ENCODE measurements at regions of chr12 and their contacts with region 1.

Region 1: GRCh38 chr12:17763366-17763765 is 326.6 kb downstream of the RERGL start:
- DNase-seq: no peak
- ATAC-seq: no peak
- H3K4me3 ChIP-seq: no peak overlapping the region
- H3K4me1 ChIP-seq: no peaks in the 10 kb centered on the region
- CTCF ChIP-seq: no peak

Region 2: GRCh38 chr12:17841496-17841895 is 78.1 kb after region 1 on chr12:
- intact Hi-C with region 1: loop called in 1 of 2 experiments (anchors 5 kb)
- DNase-seq: no peak
- ATAC-seq: no peak
- H3K4me3 ChIP-seq: no peak overlapping the region
- H3K4me1 ChIP-seq: no peaks in the 10 kb centered on the region
- CTCF ChIP-seq: no peak

Region 3: DNA sequence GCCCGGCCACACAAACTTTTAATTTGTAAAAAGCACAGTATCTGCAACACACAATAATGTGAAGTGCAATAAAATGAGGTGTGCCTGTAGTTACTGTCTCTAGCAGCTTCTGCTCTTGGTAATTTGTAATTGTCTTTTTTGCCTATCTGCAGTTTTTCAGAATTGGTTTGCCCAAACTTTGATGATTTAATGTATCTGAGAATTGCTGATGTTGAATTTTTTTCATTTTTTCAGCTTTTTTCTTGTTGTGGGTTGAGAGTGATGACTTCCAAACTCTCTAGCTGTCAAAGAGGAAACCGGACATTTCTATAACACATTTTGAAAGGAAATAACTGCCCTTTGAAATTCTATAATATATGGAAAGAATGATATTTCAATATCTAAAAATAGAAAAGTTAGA is 89.7 kb after region 1 on chr12:
- intact Hi-C with region 1: loop called (anchors 5 kb)
- DNase-seq: no peak
- ATAC-seq: no peak
- H3K4me3 ChIP-seq: no peak overlapping the region
- H3K4me1 ChIP-seq: no peaks in the 10 kb centered on the region
- CTCF ChIP-seq: no peak

Region 4: GRCh38 chr12:18400186-18400585 is 636.8 kb after region 1 on chr12:
- intact Hi-C with region 1: no loop called
- DNase-seq: no peak
- ATAC-seq: no peak
- H3K4me3 ChIP-seq: no peak overlapping the region
- H3K4me1 ChIP-seq: no peaks in the 10 kb centered on the region
- CTCF ChIP-seq: no peak